CD8-positive, alpha-beta T cell (primary cell): ENCODE measurements at regions of chr11 and their contacts with region 1.

Region 1: DNA sequence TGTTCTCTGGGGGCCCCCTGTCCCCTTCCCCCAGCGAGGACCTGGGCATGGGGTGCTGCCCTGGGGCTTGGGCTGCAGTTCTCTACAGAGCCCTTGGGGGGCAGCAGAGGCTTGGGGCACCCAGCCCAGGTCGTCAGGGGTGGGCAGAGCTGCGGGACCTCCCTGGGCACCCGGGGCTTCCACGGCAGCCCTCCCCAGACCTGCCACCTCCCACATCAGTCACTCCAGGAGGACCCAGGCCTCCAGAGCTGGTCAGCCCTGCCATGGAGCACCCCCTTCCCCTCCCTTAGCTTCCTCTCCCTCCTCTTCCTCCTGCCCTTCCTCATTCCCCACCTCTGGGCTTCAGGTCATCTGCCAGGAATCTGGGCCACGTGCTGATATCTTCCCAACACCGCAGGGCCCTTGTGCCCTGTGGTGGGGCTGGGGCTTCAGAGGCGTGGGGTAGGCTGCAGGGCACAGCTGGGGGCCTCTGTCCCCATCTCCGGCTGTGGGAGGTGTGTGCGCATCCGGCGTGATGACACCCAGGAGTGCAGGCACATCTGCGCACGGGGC is 5.8 kb downstream of the TSPAN4 start:
- DNase-seq: peak; percentile 40 to 80 (median 68)
- ATAC-seq: peak; percentile 86
- H3K4me3 ChIP-seq: peak overlapping the region in 1 of 2 experiments; percentile 3
- H3K4me3 Mint-ChIP-seq: peak overlapping the region; percentile 26
- H3K27ac ChIP-seq: no peak overlapping the region
- H3K27ac Mint-ChIP-seq: no peak overlapping the region
- H3K4me1 ChIP-seq: peaks cover 26% of the 10 kb centered on the region
- H3K4me1 Mint-ChIP-seq: peaks cover 15% of the 10 kb centered on the region
- H3K27me3 ChIP-seq: peaks cover 0 to 22% of the 10 kb centered on the region in 2 experiments
- H3K27me3 Mint-ChIP-seq: peaks cover 5% of the 10 kb centered on the region
- CTCF ChIP-seq: peak; percentile 79

Region 2: DNA sequence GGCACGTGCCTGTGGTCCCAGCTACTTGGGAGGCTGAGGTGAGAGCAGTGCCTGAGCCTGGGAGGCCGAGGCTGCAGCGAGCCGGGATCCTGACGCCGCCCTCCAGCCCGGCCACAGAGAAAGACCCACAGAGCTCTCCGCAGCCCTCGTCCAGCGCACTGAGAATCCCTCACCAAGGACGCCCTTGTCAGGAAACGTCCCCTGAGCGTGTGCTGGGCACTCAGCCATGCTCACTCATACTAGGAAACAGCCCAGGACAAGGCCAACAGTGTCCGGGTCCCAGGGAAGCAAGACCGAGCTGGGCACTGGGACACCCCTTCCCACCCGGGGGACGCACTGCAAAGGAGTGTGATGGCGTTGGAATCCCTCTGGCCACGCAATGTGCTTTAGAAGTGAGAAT is 168.0 kb before region 1 on chr11:
- CTCF ChIA-PET with region 1: no interaction called
- POLR2A ChIA-PET with region 1: no interaction called
- intact Hi-C with region 1: no loop called
- DNase-seq: no peak
- ATAC-seq: no peak
- H3K4me3 ChIP-seq: no peak overlapping the region
- H3K4me3 Mint-ChIP-seq: no peak overlapping the region
- H3K27ac ChIP-seq: no peak overlapping the region
- H3K27ac Mint-ChIP-seq: no peak overlapping the region
- H3K4me1 ChIP-seq: no peaks in the 10 kb centered on the region
- H3K4me1 Mint-ChIP-seq: peaks cover 8% of the 10 kb centered on the region
- H3K27me3 ChIP-seq: no peaks in the 10 kb centered on the region
- H3K27me3 Mint-ChIP-seq: no peaks in the 10 kb centered on the region
- CTCF ChIP-seq: no peak

Region 3: DNA sequence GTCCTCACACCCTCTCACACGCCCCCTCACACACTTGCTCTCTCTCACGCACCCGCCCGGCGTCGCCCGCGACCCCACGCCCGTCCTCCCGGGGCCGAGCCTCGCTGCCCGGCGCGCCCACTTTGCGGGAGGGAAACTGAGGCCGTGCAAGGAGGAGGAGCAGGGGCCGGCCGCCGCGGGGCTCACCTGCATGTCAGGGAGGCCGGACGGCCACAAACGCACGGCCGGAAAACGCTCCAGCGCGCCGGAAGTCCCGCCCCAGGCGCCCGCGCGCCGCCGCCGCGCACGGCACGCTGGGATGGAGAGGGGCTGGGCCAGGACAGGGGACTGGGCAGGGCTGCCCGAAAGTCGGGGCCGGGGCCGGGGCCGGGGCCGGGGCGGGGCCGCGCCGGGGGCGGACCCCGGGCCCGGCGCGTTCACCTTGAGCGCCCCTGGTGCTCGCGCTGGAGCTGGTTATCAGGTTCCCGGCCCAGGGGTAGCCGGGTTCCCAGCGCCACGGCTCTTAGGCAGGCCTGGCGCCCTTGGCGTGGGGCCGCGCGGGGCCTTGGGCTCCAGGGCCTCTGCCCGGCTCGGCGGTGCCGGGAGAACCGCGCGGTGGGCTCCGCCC is 62.2 kb after region 1 on chr11 and contains the start of gene CHID1:
- CTCF ChIA-PET with region 1: no interaction called
- POLR2A ChIA-PET with region 1: interaction called, 4 read pairs
- intact Hi-C with region 1: loop called (anchors 2 to 5 kb)
- DNase-seq: peak; percentile 51 to 89 (median 80)
- ATAC-seq: peak; percentile 94
- H3K4me3 ChIP-seq: peak within 1 kb of the TSS; percentile 63 to 92
- H3K4me3 Mint-ChIP-seq: peak within 1 kb of the TSS; percentile 91
- H3K27ac ChIP-seq: peak within 1 kb of the TSS; percentile 28 to 47
- H3K27ac Mint-ChIP-seq: peak within 1 kb of the TSS; percentile 71
- H3K4me1 ChIP-seq: peaks cover 16% of the 10 kb centered on the region
- H3K4me1 Mint-ChIP-seq: peaks cover 23% of the 10 kb centered on the region
- H3K27me3 ChIP-seq: no peaks in the 10 kb centered on the region
- H3K27me3 Mint-ChIP-seq: no peaks in the 10 kb centered on the region
- CTCF ChIP-seq: no peak
- total RNA-seq, gene CHID1: 16.0 to 18.1 TPM

Region 4: GRCh38 chr11:975827-976226 is 127.4 kb after region 1 on chr11:
- CTCF ChIA-PET with region 1: interaction called, 3 read pairs
- POLR2A ChIA-PET with region 1: no interaction called
- intact Hi-C with region 1: loop called in 1 of 2 experiments (anchors 5 kb)
- DNase-seq: no peak
- ATAC-seq: peak; percentile 36
- H3K4me3 ChIP-seq: no peak overlapping the region
- H3K4me3 Mint-ChIP-seq: no peak overlapping the region
- H3K27ac ChIP-seq: no peak overlapping the region
- H3K27ac Mint-ChIP-seq: no peak overlapping the region
- H3K4me1 ChIP-seq: peaks cover 12% of the 10 kb centered on the region
- H3K4me1 Mint-ChIP-seq: peaks cover 26% of the 10 kb centered on the region
- H3K27me3 ChIP-seq: no peaks in the 10 kb centered on the region
- H3K27me3 Mint-ChIP-seq: no peaks in the 10 kb centered on the region
- CTCF ChIP-seq: no peak

Region 5: DNA sequence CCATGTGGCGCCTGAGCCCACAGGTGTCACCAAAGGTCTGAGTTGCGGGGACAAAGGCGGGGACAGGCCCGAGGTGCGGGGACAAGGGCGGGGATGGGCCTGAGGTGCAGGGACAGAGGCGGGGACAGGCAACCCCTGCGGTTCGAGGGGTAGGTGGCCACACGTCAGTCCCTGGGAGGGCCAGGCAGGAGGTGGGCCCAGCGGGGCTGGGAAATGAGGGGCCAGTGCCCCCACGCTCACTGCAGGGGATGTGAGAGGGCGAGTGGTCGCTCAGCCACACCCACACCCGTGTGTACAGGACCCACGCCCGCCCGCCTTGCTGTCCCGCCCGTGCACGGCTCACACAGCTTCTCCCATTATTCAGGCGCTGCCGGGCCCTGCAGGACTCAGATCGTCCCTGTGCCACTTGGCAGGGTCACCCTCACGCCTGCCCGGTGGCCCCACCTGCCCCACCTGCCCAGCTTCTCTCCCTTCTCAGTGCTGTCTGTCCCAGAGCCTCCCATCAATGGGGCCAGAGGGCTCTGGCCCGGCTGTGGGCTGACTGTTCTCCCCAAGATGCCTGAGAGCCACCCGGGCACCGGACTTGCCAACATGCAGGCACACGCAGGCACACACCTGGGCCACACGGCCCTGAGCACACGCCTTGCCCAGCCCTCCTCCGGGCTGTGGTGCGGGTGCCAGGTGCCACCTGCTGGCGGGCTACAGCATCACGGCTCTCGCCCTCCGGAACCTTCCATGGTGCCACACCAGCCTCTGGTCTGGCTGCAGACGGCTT is 202.3 kb after region 1 on chr11:
- CTCF ChIA-PET with region 1: interaction called, 75 read pairs
- POLR2A ChIA-PET with region 1: no interaction called
- intact Hi-C with region 1: loop called in 1 of 2 experiments (anchors 1 kb)
- DNase-seq: peak; percentile 54 to 85 (median 70)
- ATAC-seq: peak; percentile 99
- H3K4me3 ChIP-seq: no peak overlapping the region
- H3K4me3 Mint-ChIP-seq: no peak overlapping the region
- H3K27ac ChIP-seq: no peak overlapping the region
- H3K27ac Mint-ChIP-seq: no peak overlapping the region
- H3K4me1 ChIP-seq: peaks cover 5% of the 10 kb centered on the region
- H3K4me1 Mint-ChIP-seq: no peaks in the 10 kb centered on the region
- H3K27me3 ChIP-seq: peaks cover 0 to 11% of the 10 kb centered on the region in 2 experiments
- H3K27me3 Mint-ChIP-seq: peaks cover 18% of the 10 kb centered on the region
- CTCF ChIP-seq: peak; percentile 87